ENCODE measurements at regions of chr5 and their contacts with region 1.

Region 1: GRCh38 chr5:93607367-93608258 is 24.6 kb downstream of the NR2F1 start:
- DNase-seq: peak; percentile 62
- H3K4me3 Mint-ChIP-seq: no peak overlapping the region
- H3K27ac Mint-ChIP-seq: no peak overlapping the region
- H3K4me1 Mint-ChIP-seq: peaks cover 10% of the 10 kb centered on the region
- H3K27me3 Mint-ChIP-seq: peaks cover 80% of the 10 kb centered on the region
- CTCF ChIP-seq: peak; percentile 58

Region 2: DNA sequence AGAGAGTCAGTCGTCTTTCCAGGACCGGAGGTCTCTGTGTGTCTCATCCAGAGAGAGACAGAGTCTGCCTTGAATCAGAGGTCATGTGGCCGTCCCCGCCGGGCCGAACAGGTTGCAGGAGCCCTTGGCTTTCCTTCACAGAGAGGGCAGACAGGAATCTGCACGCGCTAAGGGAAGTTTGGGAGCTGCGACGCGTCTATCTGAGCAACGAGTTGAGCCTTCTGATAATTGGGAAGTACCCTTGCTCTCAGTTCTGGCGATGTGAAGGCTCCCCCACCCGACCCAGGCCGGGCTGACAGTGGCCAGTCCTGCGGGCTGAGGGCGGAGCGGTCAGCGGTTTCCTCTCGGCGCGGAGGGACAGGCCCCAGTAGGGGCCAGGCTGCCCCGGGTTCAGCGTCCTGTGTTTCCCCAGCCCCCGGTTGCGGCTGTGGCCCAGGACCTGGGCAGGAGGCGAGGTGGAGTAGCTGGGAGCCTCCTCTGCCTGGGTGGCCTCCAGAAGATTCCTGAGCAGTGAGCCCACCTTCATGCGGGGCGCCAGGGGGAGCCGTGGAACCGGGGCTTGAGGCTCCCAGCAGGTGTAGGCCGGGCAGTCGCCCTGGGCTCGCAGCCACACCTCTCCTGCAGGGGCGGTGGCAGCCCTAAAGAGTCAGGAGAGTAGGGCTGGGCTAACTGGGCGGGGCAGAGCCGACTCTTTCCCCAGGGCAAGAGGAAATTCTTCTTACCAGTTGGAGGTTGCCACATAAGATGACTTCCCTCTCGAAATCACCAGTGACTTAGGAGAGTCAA is 10.7 kb before region 1 on chr5:
- CTCF ChIA-PET with region 1: interaction called, 36 read pairs
- POLR2A ChIA-PET with region 1: no interaction called
- intact Hi-C with region 1: no loop called
- DNase-seq: peak; percentile 79
- H3K4me3 Mint-ChIP-seq: no peak overlapping the region
- H3K27ac Mint-ChIP-seq: no peak overlapping the region
- H3K4me1 Mint-ChIP-seq: no peaks in the 10 kb centered on the region
- H3K27me3 Mint-ChIP-seq: no peaks in the 10 kb centered on the region
- CTCF ChIP-seq: no peak

Region 3: GRCh38 chr5:93782978-93783377 is 175.4 kb after region 1 on chr5:
- CTCF ChIA-PET with region 1: interaction called, 18 read pairs
- POLR2A ChIA-PET with region 1: no interaction called
- intact Hi-C with region 1: loop called (anchors 2 kb)
- DNase-seq: no peak
- H3K4me3 Mint-ChIP-seq: no peak overlapping the region
- H3K27ac Mint-ChIP-seq: no peak overlapping the region
- H3K4me1 Mint-ChIP-seq: no peaks in the 10 kb centered on the region
- H3K27me3 Mint-ChIP-seq: no peaks in the 10 kb centered on the region
- CTCF ChIP-seq: no peak

Region 4: GRCh38 chr5:93794954-93795353 is 187.3 kb after region 1 on chr5:
- CTCF ChIA-PET with region 1: interaction called, 50 read pairs
- POLR2A ChIA-PET with region 1: no interaction called
- intact Hi-C with region 1: loop called (anchors 2 kb)
- DNase-seq: peak; percentile 27
- H3K4me3 Mint-ChIP-seq: no peak overlapping the region
- H3K27ac Mint-ChIP-seq: no peak overlapping the region
- H3K4me1 Mint-ChIP-seq: no peaks in the 10 kb centered on the region
- H3K27me3 Mint-ChIP-seq: no peaks in the 10 kb centered on the region
- CTCF ChIP-seq: no peak

Region 5: GRCh38 chr5:93909356-93909755 is 301.7 kb after region 1 on chr5:
- CTCF ChIA-PET with region 1: interaction called, 10 read pairs
- POLR2A ChIA-PET with region 1: no interaction called
- intact Hi-C with region 1: no loop called
- DNase-seq: no peak
- H3K4me3 Mint-ChIP-seq: no peak overlapping the region
- H3K27ac Mint-ChIP-seq: no peak overlapping the region
- H3K4me1 Mint-ChIP-seq: no peaks in the 10 kb centered on the region
- H3K27me3 Mint-ChIP-seq: no peaks in the 10 kb centered on the region
- CTCF ChIP-seq: no peak